Caco-2 (cell line): ENCODE measurements at regions of chr9 and their contacts with region 1.

Region 1: DNA sequence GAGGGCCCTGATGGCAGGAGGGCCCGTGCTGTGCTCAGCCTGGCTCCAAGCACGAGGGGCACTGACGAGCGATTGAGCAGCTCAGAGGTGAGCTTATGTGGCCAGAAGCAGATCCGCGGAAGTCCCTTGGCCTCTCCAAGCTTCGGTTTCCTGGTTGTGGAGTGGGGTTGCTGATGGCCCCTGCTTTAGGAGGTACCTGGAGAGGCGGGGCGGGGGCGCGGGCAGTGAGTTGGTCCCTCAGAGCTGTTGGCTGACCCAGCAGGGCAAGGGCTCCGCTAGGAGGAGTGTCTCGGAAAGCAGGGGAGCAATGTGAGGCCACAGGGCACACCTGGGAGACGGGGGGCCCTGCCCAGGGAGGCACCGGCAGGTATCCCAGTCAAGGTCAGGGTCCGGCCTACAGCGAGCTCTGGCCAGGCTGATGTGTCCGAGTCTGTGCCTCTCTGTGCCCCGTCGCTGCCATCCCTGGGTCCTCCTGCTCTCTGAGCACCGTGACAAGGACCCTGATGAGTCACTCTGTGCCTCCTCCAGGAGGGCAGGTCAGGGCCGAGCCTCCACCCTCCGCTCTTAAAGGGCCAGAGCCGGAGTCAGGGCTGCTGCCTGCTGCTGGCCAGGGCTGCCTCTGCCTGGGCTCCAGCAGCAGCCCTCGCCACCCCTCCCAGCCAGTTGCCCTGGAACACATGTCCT is 14.8 kb downstream of the NCS1 start:
- DNase-seq: peak; percentile 68 to 73
- H3K4me3 ChIP-seq: peak overlapping the region; percentile 30
- H3K4me3 Mint-ChIP-seq: peak overlapping the region; percentile 28
- H3K27ac Mint-ChIP-seq: peak overlapping the region; percentile 44
- H3K4me1 ChIP-seq: peaks cover 23% of the 10 kb centered on the region
- H3K4me1 Mint-ChIP-seq: peaks cover 20% of the 10 kb centered on the region
- H3K27me3 ChIP-seq: no peaks in the 10 kb centered on the region
- H3K27me3 Mint-ChIP-seq: no peaks in the 10 kb centered on the region
- CTCF ChIP-seq: no peak

Region 2: GRCh38 chr9:130204959-130205358 is 18.0 kb after region 1 on chr9:
- CTCF ChIA-PET with region 1: no interaction called
- POLR2A ChIA-PET with region 1: interaction called, 10 read pairs
- intact Hi-C with region 1: no loop called
- DNase-seq: no peak
- H3K4me3 ChIP-seq: no peak overlapping the region
- H3K4me3 Mint-ChIP-seq: no peak overlapping the region
- H3K27ac Mint-ChIP-seq: no peak overlapping the region
- H3K4me1 ChIP-seq: peaks cover 6% of the 10 kb centered on the region; the same call in 1 of the 2 replicates
- H3K4me1 Mint-ChIP-seq: peaks cover 12% of the 10 kb centered on the region
- H3K27me3 ChIP-seq: no peaks in the 10 kb centered on the region
- H3K27me3 Mint-ChIP-seq: no peaks in the 10 kb centered on the region
- CTCF ChIP-seq: no peak

Region 3: GRCh38 chr9:130433168-130433946 is 246.4 kb after region 1 on chr9:
- CTCF ChIA-PET with region 1: no interaction called
- POLR2A ChIA-PET with region 1: no interaction called
- intact Hi-C with region 1: no loop called
- DNase-seq: peak; percentile 67 to 79
- H3K4me3 ChIP-seq: peak overlapping the region; percentile 61
- H3K4me3 Mint-ChIP-seq: peak overlapping the region; percentile 73
- H3K27ac Mint-ChIP-seq: no peak overlapping the region
- H3K4me1 ChIP-seq: peaks cover 13% of the 10 kb centered on the region
- H3K4me1 Mint-ChIP-seq: no peaks in the 10 kb centered on the region
- H3K27me3 ChIP-seq: no peaks in the 10 kb centered on the region
- H3K27me3 Mint-ChIP-seq: no peaks in the 10 kb centered on the region
- CTCF ChIP-seq: peak; percentile 39 to 63

Region 4: DNA sequence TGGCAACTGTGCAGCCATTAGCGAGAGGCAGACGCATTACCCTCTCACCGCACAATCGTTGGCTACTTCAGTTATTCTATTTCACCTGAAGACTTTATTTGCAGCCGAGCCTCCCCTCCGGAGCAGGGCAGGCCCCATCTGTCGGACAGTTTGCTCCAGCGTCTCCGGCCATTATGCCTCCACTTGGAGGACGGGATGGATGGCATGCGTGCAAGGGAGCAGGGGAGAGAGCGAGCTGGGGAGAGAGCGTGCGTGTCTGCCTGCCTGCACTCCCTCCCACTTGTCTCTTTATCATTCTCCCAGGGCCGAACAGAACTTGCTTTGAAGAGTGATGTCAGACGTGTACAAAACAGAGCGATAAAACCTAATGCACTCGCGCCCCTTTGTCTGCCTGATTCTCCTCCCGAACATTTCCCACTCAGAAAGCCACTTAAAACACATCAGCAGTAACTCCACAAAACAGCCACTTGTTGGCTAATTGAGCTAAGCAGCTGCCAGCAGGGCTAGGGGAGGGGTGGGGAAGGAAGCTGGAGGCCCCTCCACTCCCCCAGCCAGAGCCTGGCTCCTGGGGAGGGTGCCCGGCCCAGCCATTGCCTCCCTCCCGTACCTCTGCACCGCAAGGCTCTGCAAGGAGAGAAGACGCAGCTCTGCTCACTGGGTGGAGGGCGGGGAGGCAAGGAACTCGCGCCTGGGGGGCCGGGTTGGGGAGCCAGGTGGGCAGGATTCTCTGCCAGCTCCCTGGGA is 349.0 kb after region 1 on chr9:
- CTCF ChIA-PET with region 1: no interaction called
- POLR2A ChIA-PET with region 1: no interaction called
- intact Hi-C with region 1: no loop called
- DNase-seq: no peak
- H3K4me3 ChIP-seq: no peak overlapping the region
- H3K4me3 Mint-ChIP-seq: no peak overlapping the region
- H3K27ac Mint-ChIP-seq: no peak overlapping the region
- H3K4me1 ChIP-seq: no peaks in the 10 kb centered on the region
- H3K4me1 Mint-ChIP-seq: peaks cover 6% of the 10 kb centered on the region
- H3K27me3 ChIP-seq: no peaks in the 10 kb centered on the region
- H3K27me3 Mint-ChIP-seq: peaks cover 19% of the 10 kb centered on the region
- CTCF ChIP-seq: no peak